Esophagus squamous epithelium (tissue), 5 donors: ENCODE measurements at regions of chr12 and their contacts with region 1.

Region 1: GRCh38 chr12:64696080-64696741 is 63.0 kb downstream of the GNS start:
- DNase-seq: no peak
- H3K4me3 ChIP-seq: no peak overlapping the region
- H3K27ac ChIP-seq: peak overlapping the region in 1 of 4 donors; percentile 3
- H3K4me1 ChIP-seq: peaks cover 0 to 14% (median 0%) of the 10 kb centered on the region in 3 donors
- H3K27me3 ChIP-seq: no peaks in the 10 kb centered on the region
- CTCF ChIP-seq: peak in 4 of 6 experiments; percentile 15 to 41 (median 30)
- POLR2A ChIP-seq: no peak

Region 2: GRCh38 chr12:64551698-64552097 is 144.5 kb before region 1 on chr12:
- intact Hi-C with region 1: loop called (anchors 5 kb)
- DNase-seq: no peak
- H3K4me3 ChIP-seq: no peak overlapping the region
- H3K27ac ChIP-seq: no peak overlapping the region
- H3K4me1 ChIP-seq: peaks cover 0 to 6% (median 0%) of the 10 kb centered on the region in 3 donors
- H3K27me3 ChIP-seq: no peaks in the 10 kb centered on the region
- CTCF ChIP-seq: no peak
- POLR2A ChIP-seq: no peak

Region 3: DNA sequence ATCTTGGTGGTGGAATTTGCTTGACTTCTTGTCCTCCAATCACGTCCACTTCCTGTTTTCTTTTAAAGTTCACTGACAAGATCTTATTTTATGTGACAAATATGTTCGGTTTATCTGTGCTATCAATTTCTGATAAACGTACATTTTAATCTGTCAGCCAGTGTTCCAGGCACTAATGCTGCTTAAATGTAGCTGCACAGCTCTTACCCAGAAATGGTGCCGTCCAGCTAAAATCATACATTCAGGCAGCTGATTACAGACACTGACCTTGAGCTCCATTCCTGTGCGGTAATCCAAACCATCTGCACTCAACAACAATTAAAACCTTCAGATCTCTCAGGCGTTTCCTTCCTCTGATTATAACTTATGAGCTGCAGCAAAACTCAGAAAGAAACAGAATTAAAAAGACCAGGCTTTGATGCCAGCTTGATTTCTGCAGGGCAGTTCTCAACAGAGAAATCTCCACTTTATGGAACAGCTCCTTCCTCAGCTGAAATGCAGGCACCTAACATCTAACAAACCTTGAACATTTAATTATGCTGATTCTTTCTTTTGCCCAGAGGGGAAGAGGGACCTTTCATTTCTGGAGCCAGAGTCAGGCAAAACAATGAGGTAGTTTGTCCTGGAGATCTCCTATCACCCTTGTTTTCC is 112.3 kb before region 1 on chr12:
- intact Hi-C with region 1: no loop called
- DNase-seq: no peak
- H3K4me3 ChIP-seq: peak overlapping the region in 1 of 4 donors; percentile 42
- H3K27ac ChIP-seq: peak overlapping the region in 2 of 4 donors; percentile 17 to 69
- H3K4me1 ChIP-seq: peaks cover 0 to 26% (median 11%) of the 10 kb centered on the region in 3 donors
- H3K27me3 ChIP-seq: no peaks in the 10 kb centered on the region
- CTCF ChIP-seq: no peak
- POLR2A ChIP-seq: no peak

Region 4: DNA sequence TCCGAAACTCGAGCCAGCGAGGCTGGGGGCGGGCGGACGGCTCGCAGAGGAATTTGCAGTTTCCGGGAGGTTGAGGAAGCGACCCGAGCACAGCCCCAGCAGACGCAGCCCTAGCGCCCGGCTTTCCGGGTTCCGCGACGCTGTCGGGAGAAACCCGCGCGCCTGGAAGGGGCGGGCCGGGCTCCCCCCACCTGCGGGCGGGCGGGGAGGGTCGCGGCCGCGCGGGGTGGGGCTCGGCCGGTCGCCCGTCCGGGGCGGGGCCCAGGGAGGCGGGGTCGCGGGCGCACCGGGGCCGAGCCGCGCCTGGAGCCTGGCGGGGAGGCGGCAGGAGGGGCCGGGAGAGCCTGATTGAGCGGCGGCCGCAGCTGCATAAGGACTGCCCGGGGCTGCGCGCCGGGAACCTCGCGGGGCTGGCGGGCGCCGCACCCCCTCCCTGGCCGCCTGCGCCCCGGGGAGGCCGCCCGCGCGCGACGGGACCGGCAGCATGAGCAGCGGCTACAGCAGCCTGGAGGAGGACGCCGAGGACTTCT is 86.0 kb before region 1 on chr12 and contains the start of gene RASSF3:
- intact Hi-C with region 1: loop called (anchors 10 kb)
- DNase-seq: peak; percentile 17
- H3K4me3 ChIP-seq: peak within 1 kb of the TSS; percentile 86 to 99 (median 93)
- H3K27ac ChIP-seq: peak within 1 kb of the TSS; percentile 81 to 96 (median 92)
- H3K4me1 ChIP-seq: peaks cover 3 to 47% (median 5%) of the 10 kb centered on the region in 3 donors
- H3K27me3 ChIP-seq: no peaks in the 10 kb centered on the region
- CTCF ChIP-seq: no peak
- POLR2A ChIP-seq: peak in 2 of 4 donors; percentile 56 to 72
- total RNA-seq, gene RASSF3: 10.4 to 44.4 (median 15.5) TPM

Region 5: GRCh38 chr12:64900540-64900939 is 204.3 kb after region 1 on chr12:
- intact Hi-C with region 1: no loop called
- DNase-seq: no peak
- H3K4me3 ChIP-seq: no peak overlapping the region
- H3K27ac ChIP-seq: no peak overlapping the region
- H3K4me1 ChIP-seq: no peaks in the 10 kb centered on the region
- H3K27me3 ChIP-seq: peaks cover 0 to 3% (median 0%) of the 10 kb centered on the region in 4 donors
- CTCF ChIP-seq: no peak
- POLR2A ChIP-seq: no peak